ENCODE measurements at regions of chr10 and their contacts with region 1.

Region 1: GRCh38 chr10:80444646-80445319 is 9.3 kb upstream of the TSPAN14 start:
- DNase-seq: no peak
- H3K4me3 ChIP-seq: no peak overlapping the region
- CTCF ChIP-seq: peak; percentile 82

Region 2: GRCh38 chr10:80333983-80334382 is 110.8 kb before region 1 on chr10:
- CTCF ChIA-PET with region 1: no interaction called
- POLR2A ChIA-PET with region 1: no interaction called
- DNase-seq: no peak
- H3K4me3 ChIP-seq: no peak overlapping the region
- CTCF ChIP-seq: no peak

Region 3: GRCh38 chr10:80462981-80463741 is 18.4 kb after region 1 on chr10:
- CTCF ChIA-PET with region 1: interaction called, 17 read pairs
- POLR2A ChIA-PET with region 1: no interaction called
- DNase-seq: no peak
- H3K4me3 ChIP-seq: peak overlapping the region; percentile 32
- CTCF ChIP-seq: no peak

Region 4: DNA sequence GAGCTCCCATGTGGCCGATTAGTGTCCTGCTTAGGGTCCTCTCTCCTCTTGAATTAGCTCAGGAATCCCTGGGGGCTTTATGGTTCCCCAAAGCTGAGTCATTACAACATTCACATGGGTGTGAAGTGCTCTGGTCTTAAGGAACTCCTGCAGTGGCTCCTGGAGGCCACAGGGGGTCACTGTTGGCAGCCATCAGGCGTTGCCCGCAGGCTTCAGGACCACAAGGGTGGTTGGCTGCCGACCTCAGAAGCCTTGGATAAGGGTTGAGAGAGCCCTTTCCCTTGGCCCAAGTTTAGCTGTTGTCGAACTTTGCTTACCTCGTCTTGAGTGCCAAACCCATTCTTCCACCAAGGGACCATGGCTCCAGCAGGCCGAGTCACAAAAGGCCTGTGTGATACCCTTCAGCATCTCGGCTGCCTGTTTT is 154.7 kb after region 1 on chr10:
- CTCF ChIA-PET with region 1: interaction called, 17 read pairs
- POLR2A ChIA-PET with region 1: no interaction called
- DNase-seq: no peak
- H3K4me3 ChIP-seq: no peak overlapping the region
- CTCF ChIP-seq: peak; percentile 65

Region 5: GRCh38 chr10:80699602-80700039 is 254.8 kb after region 1 on chr10:
- CTCF ChIA-PET with region 1: interaction called, 10 read pairs
- POLR2A ChIA-PET with region 1: no interaction called
- DNase-seq: no peak
- H3K4me3 ChIP-seq: no peak overlapping the region
- CTCF ChIP-seq: peak; percentile 91

Region 6: GRCh38 chr10:81704596-81704995 is 1259.8 kb after region 1 on chr10:
- CTCF ChIA-PET with region 1: no interaction called
- POLR2A ChIA-PET with region 1: no interaction called
- DNase-seq: no peak
- H3K4me3 ChIP-seq: no peak overlapping the region
- CTCF ChIP-seq: no peak

Measured in AG04449 (cell line).